A673 (cell line): ENCODE measurements at regions of chr2 and their contacts with region 1.

Region 1: DNA sequence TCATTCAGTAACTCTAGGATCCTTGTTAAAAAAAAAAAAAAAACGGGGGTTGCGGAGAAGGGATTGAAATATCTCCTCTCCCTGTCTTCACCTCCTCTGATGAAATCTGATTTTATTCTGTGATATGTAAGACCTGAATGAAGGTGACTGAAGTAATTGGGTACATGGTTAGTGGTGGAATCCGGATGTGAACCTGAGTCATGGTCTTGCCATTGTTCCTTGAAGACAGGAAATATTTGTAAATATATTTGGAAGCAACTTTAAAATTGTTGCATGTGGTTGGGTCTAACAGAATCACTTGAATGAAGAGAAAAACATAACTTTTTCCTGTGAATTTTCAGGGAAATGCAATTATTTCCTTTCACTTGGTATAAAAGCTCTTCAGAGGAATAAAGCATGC is 3.0 kb upstream of the IL1A start:
- DNase-seq: no peak
- H3K4me3 ChIP-seq: no peak overlapping the region
- H3K27ac ChIP-seq: no peak overlapping the region
- H3K4me1 ChIP-seq: peaks cover 17% of the 10 kb centered on the region
- H3K27me3 ChIP-seq: no peaks in the 10 kb centered on the region
- CTCF ChIP-seq: no peak

Region 2: GRCh38 chr2:112301171-112301584 is 486.1 kb before region 1 on chr2:
- CTCF ChIA-PET with region 1: no interaction called
- POLR2A ChIA-PET with region 1: no interaction called
- intact Hi-C with region 1: no loop called
- DNase-seq: no peak
- H3K4me3 ChIP-seq: no peak overlapping the region
- H3K27ac ChIP-seq: no peak overlapping the region
- H3K4me1 ChIP-seq: no peaks in the 10 kb centered on the region
- H3K27me3 ChIP-seq: no peaks in the 10 kb centered on the region
- CTCF ChIP-seq: no peak

Region 3: GRCh38 chr2:112692496-112692911 is 94.8 kb before region 1 on chr2:
- CTCF ChIA-PET with region 1: no interaction called
- POLR2A ChIA-PET with region 1: no interaction called
- intact Hi-C with region 1: no loop called
- DNase-seq: no peak
- H3K4me3 ChIP-seq: no peak overlapping the region
- H3K27ac ChIP-seq: no peak overlapping the region
- H3K4me1 ChIP-seq: no peaks in the 10 kb centered on the region
- H3K27me3 ChIP-seq: no peaks in the 10 kb centered on the region
- CTCF ChIP-seq: no peak

Region 4: DNA sequence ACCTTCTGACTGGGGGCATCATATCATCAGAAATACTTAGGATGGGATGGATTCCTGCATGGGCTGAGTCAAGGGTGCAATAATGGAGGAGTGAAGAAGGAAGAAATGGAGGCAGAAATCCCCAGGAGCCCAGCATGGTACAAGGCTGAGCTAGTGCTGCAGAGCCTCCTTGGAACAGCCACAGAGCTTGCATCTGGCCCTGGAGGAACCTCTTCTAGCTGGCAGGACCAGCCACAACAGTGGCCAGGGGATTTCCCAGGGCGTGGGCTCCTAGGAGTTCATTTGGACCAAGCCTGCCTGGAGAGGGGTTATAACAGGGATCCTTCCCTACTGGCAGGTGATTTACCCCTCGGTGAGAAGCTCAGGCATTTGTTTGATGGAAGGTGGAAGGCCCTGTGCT is 119.0 kb after region 1 on chr2:
- CTCF ChIA-PET with region 1: no interaction called
- POLR2A ChIA-PET with region 1: interaction called, 27 read pairs
- intact Hi-C with region 1: no loop called
- DNase-seq: no peak
- H3K4me3 ChIP-seq: no peak overlapping the region
- H3K27ac ChIP-seq: no peak overlapping the region
- H3K4me1 ChIP-seq: no peaks in the 10 kb centered on the region
- H3K27me3 ChIP-seq: no peaks in the 10 kb centered on the region
- CTCF ChIP-seq: no peak

Region 5: DNA sequence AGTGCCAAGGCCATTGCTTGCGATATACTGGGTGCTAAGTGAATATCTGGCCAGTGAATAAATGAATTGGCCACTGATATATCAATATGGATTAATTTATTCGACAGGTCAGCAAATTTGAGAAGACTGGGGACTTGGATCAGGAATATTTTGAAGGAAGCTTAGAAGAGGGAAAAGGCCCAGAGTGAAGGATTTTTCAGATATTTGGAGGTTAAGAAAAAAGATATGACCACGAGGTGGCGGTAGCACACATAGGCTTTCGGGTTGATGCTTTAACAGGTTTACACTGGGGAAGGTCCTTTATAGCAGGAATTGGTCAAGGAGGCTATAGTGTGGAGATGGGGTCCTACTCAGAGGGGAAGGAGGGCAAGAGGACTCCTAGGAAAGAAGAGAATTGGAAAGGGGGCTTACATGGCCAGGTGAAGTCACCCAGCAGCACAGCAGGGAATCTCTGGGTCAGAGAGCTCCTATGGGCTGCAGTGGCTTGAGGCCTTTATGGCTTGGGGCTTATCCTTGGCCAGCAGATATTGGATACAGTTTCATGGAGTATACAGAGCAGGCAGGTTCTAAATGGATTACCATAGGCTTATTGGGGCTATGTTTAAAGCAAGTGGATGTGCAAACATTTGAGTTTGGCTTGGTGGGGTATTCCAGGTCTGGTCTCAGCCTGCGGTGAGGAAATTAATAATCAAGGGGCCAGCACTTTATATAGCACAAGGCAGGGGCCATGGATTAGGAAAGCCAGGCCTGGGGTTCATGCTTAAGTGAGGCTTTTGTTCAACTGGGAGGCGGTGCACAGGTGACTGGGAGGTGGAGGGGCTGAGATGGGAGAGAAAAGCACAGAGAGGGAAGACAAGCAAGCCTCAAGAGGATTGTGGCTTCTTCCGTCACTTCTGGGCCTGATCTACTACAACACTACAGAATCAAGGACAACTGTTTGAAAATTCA is 349.8 kb after region 1 on chr2:
- CTCF ChIA-PET with region 1: no interaction called
- POLR2A ChIA-PET with region 1: no interaction called
- intact Hi-C with region 1: no loop called
- DNase-seq: peak; percentile 46
- H3K4me3 ChIP-seq: no peak overlapping the region
- H3K27ac ChIP-seq: no peak overlapping the region
- H3K4me1 ChIP-seq: no peaks in the 10 kb centered on the region
- H3K27me3 ChIP-seq: no peaks in the 10 kb centered on the region
- CTCF ChIP-seq: peak; percentile 78